PC-9 (cell line): ENCODE measurements at regions of chr13 and their contacts with region 1.

Region 1: DNA sequence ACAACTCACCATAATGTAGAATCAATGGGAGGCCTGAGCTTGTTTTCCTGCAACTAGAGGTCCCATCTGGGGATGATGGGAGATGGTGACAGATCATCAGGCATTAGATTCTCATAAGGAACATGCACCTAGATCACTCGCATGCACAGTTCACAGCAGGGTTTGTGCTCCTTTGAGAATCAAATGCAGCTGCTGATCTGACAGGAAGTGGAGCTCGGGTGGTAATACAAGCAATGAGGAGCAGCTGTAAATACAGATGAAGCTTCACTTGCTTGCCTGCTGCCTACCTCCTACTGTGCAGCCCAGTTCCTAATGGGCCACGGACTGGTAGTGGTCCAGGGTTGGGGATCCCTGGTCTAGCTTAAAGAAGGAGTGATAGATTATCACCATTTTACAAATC is 33.0 kb downstream of the KPNA3 start:
- DNase-seq: no peak
- H3K4me3 ChIP-seq: no peak overlapping the region
- H3K27ac ChIP-seq: no peak overlapping the region
- H3K4me1 ChIP-seq: no peaks in the 10 kb centered on the region
- H3K27me3 ChIP-seq: no peaks in the 10 kb centered on the region
- CTCF ChIP-seq: no peak

Region 2: DNA sequence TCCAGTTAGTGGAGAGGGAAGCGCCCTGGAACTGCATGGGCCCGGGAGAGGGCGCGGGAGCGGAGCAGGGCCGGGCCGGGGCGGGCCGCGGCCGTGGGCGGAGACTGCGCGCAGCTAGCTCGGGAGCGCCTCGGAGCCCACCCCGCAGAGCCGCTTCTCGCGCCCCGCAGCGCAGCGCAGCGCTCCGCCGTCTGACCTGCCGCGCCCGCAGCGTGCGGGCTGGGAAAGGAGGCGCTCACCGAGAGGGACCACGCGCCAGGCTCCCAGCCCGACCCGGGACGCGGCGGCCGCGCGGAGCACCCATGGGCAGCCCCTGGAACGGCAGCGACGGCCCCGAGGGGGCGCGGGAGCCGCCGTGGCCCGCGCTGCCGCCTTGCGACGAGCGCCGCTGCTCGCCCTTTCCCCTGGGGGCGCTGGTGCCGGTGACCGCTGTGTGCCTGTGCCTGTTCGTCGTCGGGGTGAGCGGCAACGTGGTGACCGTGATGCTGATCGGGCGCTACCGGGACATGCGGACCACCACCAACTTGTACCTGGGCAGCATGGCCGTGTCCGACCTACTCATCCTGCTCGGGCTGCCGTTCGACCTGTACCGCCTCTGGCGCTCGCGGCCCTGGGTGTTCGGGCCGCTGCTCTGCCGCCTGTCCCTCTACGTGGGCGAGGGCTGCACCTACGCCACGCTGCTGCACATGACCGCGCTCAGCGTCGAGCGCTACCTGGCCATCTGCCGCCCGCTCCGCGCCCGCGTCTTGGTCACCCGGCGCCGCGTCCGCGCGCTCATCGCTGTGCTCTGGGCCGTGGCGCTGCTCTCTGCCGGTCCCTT is 539.3 kb before region 1 on chr13 and contains the start of gene MLNR:
- CTCF ChIA-PET with region 1: no interaction called
- POLR2A ChIA-PET with region 1: no interaction called
- intact Hi-C with region 1: no loop called
- DNase-seq: no peak
- H3K4me3 ChIP-seq: no peak within 1 kb of the TSS
- H3K27ac ChIP-seq: no peak within 1 kb of the TSS
- H3K4me1 ChIP-seq: no peaks in the 10 kb centered on the region
- H3K27me3 ChIP-seq: peaks cover 38% of the 10 kb centered on the region
- CTCF ChIP-seq: no peak
- total RNA-seq, gene MLNR: not detected in 2 replicates

Region 3: DNA sequence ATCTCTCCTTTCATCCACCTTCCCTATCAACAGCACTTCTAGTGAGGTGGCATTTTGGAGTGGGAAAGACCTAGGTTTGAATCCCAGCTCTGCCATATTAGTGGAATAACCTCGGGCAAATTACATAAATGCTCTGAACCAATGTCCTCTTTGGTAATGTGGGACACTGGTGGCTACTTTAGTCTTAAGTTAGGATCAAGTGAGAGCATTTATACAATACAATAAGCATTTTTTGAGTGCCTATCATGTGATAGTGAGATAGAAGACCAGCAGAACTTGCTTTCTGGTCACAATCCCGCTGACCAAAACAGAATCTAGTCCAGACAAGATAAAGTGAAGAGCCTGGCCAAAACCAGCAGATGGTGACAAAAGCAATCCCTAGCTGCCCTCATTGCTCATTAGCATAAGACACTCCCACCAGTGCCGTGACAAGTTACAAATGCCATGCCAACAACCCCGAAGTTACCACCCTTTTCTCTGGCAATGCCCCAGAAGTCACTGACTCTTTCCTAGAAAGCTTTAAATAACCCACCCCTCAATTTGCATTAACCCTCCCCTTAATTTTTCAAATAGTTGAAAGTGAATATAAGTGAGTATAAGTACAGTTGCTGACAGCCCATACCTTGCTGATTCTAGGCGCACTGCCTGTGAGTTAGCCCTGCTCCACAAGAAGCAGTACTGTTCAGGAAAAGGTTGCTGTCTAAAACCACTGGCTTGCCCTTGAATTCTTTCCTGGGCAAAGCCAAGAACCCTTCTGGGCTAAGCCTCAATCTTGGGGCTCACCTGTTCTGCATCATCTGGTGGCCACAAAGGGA is 61.9 kb after region 1 on chr13:
- CTCF ChIA-PET with region 1: no interaction called
- POLR2A ChIA-PET with region 1: no interaction called
- intact Hi-C with region 1: loop called (anchors 10 kb)
- DNase-seq: peak in 1 of 2 experiments; percentile 4
- H3K4me3 ChIP-seq: no peak overlapping the region
- H3K27ac ChIP-seq: no peak overlapping the region
- H3K4me1 ChIP-seq: no peaks in the 10 kb centered on the region
- H3K27me3 ChIP-seq: no peaks in the 10 kb centered on the region
- CTCF ChIP-seq: no peak